Ascending aorta (tissue), 2 donors: ENCODE measurements at regions of chr4 and their contacts with region 1.

Region 1: DNA sequence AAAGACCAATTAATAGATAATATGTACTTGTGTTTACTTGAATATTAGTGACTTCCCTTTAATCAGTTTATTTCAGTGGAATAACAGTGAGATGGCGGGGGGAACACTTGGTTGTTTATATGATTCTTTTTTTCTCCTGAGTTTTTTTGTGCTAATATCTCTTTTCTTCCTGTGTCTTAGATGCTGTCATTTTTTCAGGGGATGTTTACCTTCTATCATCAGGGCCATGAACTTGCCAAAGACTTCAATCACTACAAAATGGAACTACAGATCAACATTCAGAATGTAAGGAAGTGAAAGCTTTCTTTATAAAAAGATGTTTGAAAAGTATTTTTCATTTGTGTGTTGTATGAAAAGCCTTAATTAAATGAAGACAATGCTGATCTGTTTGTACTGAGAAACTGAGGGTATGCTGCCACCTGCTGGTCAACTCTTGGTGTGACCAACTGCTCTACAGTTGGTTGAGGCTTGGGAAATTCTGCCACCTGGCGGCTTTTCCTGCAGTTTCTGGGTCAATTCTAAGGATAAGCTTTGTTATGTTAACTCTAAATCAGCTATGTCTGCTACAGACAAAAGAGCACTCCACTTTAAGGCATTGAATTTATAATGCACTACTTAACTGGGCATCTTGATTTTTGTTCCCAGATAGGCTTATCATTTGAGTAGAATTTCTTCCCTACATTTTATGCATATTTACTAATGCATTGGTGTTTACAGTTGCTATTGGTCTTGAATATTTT is 134.8 kb downstream of the ARHGAP10 start:
- DNase-seq: peak; percentile 60 to 95
- H3K4me3 ChIP-seq: no peak overlapping the region
- H3K27ac ChIP-seq: peak overlapping the region in 1 of 2 donors; percentile 68
- H3K4me1 ChIP-seq: peaks cover 3 to 40% of the 10 kb centered on the region in 2 donors
- H3K27me3 ChIP-seq: no peaks in the 10 kb centered on the region
- CTCF ChIP-seq: peak; percentile 96 to 99 (median 97)

Region 2: DNA sequence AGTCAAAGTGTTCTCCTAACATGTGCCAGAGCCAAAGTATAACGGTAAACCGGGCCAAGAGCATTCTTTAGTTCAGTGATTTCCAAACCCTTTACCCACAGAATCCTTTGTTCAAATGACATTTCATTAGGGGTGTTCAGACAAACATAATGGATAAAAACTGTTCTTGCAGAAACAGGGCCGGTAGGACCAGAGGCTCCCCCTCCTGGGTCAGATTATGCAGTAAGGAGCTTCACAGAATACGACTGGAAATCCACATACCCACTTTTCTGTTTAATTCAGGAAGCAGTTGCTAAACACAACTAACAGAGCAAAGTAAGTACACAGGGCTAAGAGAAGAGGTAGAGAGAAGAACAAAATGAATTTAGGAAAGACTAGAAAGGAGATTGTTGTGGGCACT is 296.1 kb before region 1 on chr4:
- intact Hi-C with region 1: no loop called
- DNase-seq: no peak
- H3K4me3 ChIP-seq: no peak overlapping the region
- H3K27ac ChIP-seq: no peak overlapping the region
- H3K4me1 ChIP-seq: no peaks in the 10 kb centered on the region
- H3K27me3 ChIP-seq: no peaks in the 10 kb centered on the region
- CTCF ChIP-seq: peak in 1 of 3 experiments; percentile 35

Region 3: GRCh38 chr4:147617173-147617840 is 249.4 kb before region 1 on chr4 and contains the start of gene TMEM184C:
- intact Hi-C with region 1: loop called (anchors 1 kb)
- DNase-seq: peak; percentile 96 to 99
- H3K4me3 ChIP-seq: peak within 1 kb of the TSS; percentile 82 to 91
- H3K27ac ChIP-seq: peak within 1 kb of the TSS; percentile 64 to 84
- H3K4me1 ChIP-seq: peaks cover 0 to 20% of the 10 kb centered on the region in 2 donors
- H3K27me3 ChIP-seq: no peaks in the 10 kb centered on the region
- CTCF ChIP-seq: peak in 1 of 3 experiments; percentile 6
- total RNA-seq, gene TMEM184C: 14.2 TPM

Region 4: DNA sequence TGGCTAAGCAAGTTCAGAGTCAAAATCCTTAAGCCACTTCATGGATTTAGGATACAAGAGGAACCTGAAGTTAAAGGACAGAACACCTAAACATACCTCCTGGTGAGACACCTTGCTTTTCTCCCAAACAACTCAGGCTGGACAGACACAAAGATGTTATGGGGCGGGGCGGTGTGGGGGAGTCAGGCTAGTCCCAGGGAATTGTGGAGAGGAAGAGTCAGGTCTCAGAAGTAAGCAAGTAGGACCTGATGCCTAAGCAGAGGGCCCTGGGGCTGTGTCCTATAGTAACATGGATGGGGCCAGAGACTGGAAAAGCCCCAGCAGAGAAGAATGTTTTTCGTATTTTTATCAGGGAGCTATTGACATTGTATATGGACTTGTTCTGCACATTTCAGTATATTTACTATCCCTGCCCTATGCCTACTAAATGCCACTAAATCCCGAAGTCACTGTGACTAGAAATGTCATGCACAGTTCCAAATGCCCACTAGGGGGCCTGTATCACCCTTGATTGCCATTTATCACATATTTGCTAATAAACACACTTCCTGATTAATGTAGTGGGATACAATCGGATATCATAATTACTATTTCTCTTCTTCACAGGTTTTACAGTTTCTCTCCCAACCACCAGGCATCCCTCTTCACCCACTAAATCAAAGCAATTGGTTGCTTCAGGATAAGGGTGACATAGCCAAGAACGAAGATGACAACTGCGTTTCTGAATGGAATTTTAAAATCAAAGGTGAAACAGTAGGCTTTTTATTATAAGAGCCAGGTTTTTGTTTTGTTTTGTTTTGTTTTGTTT is 158.6 kb before region 1 on chr4:
- intact Hi-C with region 1: loop called (anchors 1 kb)
- DNase-seq: peak in 1 of 2 donors; percentile 77
- H3K4me3 ChIP-seq: no peak overlapping the region
- H3K27ac ChIP-seq: no peak overlapping the region
- H3K4me1 ChIP-seq: no peaks in the 10 kb centered on the region
- H3K27me3 ChIP-seq: no peaks in the 10 kb centered on the region
- CTCF ChIP-seq: peak; percentile 79 to 84 (median 79)

Region 5: DNA sequence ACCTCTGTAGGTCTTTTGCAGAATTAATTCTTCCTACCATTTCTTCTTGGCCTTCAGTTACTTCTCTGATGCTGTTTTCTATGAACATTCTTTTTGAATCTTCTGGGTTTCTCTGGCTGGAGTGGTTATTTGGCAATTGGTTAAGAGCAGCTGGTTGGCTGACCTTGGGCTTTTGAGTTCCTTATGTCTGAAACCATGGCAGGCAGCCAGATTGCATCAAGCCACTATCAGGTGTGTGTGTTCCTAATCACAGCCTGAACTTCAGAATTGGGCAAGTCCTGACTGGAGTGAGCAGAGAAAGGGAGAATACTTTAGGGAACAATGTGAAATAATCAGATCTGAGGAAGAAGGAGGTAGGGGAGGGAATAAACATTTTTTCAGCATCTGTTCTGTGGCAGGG is 44.6 kb before region 1 on chr4:
- intact Hi-C with region 1: loop called (anchors 2 kb)
- DNase-seq: peak; percentile 43 to 80
- H3K4me3 ChIP-seq: no peak overlapping the region
- H3K27ac ChIP-seq: peak overlapping the region; percentile 27 to 64
- H3K4me1 ChIP-seq: peaks cover 14 to 55% of the 10 kb centered on the region in 2 donors
- H3K27me3 ChIP-seq: no peaks in the 10 kb centered on the region
- CTCF ChIP-seq: no peak